ENCODE measurements at regions of chrX and their contacts with region 1.

Region 1: DNA sequence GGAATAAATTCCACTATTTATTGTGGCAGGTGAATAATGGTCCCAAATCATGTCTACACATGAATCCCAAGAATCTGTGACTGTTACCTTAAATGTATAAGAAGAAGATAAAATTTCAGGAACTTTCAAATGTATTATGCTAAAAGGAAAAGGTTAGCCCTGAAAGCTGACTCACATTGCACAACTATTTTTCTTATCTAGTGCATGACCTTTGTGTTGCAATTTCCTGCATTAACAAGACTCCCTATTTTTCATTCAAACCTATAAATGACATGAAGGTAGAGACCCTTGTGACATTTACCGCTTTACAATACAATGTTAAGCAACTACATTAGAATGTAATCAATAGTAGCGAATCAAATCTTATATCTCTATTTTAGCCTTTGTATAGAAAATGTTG is 36.7 kb downstream of the UBQLN2 start:
- DNase-seq: peak; percentile 12
- ATAC-seq: no peak
- H3K4me3 ChIP-seq: no peak overlapping the region
- H3K27ac ChIP-seq: no peak overlapping the region
- H3K4me1 ChIP-seq: peaks cover 27% of the 10 kb centered on the region
- H3K27me3 ChIP-seq: no peaks in the 10 kb centered on the region
- CTCF ChIP-seq: no peak
- EP300 ChIP-seq: no peak
- POLR2A ChIP-seq: no peak
- RAD21 ChIP-seq: no peak

Region 2: DNA sequence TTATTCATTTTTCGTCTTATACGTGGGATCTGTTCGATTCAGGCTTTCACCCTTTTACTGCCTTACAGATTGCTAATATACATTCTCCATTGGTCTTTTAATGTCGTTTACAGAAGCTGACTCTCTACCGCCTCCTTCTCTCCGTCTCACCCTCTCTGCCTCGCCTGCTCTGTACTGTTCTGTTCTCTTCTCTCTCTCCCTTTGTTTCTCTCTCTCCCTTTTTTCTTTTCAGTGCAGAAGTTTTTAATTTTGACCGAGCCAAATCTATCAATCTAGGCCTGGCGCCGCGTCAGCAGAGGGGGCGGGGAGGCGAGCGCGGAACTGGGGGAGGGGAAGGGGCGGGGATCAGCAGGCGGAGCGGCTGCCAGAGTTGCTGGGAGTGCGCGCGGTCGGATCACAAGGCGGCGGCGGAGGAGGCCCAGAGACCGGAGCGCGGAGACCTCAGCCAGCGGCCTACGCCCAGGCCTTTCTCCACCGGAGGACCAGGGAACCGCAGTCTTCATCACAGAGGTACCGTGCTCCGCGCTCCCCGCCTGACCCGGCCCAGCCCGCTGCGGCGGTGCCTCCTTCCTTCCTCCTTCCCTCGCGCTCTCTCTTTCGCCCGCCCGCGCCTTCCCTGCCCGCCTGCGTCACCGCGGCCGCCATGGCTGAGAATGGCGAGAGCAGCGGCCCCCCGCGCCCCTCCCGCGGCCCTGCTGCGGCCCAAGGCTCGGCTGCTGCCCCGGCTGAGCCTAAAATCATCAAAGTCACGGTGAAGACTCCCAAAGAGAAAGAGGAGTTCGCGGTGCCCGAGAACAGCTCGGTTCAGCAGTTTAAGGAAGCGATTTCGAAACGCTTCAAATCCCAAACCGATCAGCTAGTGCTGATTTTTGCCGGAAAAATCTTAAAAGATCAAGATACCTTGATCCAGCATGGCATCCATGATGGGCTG is 36.6 kb before region 1 on chrX and contains the start of gene UBQLN2:
- CTCF ChIA-PET with region 1: no interaction called
- POLR2A ChIA-PET with region 1: no interaction called
- in situ Hi-C with region 1: no loop called
- intact Hi-C with region 1: loop called (anchors 2 kb)
- DNase-seq: peak; percentile 30
- ATAC-seq: peak; percentile 92
- H3K4me3 ChIP-seq: peak within 1 kb of the TSS; percentile 76 to 80 (median 79)
- H3K27ac ChIP-seq: peak within 1 kb of the TSS; percentile 82
- H3K4me1 ChIP-seq: no peaks in the 10 kb centered on the region
- H3K27me3 ChIP-seq: no peaks in the 10 kb centered on the region; a peak in 1 of 5 replicates
- CTCF ChIP-seq: no peak
- EP300 ChIP-seq: no peak
- POLR2A ChIP-seq: peak; percentile 73 to 87
- RAD21 ChIP-seq: no peak
- total RNA-seq, gene UBQLN2: 4.1 and 6.9 TPM in 2 replicates

Region 3: GRCh38 chrX:56574861-56575260 is 25.3 kb before region 1 on chrX:
- CTCF ChIA-PET with region 1: no interaction called
- POLR2A ChIA-PET with region 1: no interaction called
- in situ Hi-C with region 1: no loop called
- intact Hi-C with region 1: no loop called
- DNase-seq: no peak
- ATAC-seq: no peak
- H3K4me3 ChIP-seq: no peak overlapping the region
- H3K27ac ChIP-seq: no peak overlapping the region
- H3K4me1 ChIP-seq: no peaks in the 10 kb centered on the region
- H3K27me3 ChIP-seq: no peaks in the 10 kb centered on the region
- CTCF ChIP-seq: no peak
- EP300 ChIP-seq: no peak
- POLR2A ChIP-seq: no peak
- RAD21 ChIP-seq: no peak

Region 4: DNA sequence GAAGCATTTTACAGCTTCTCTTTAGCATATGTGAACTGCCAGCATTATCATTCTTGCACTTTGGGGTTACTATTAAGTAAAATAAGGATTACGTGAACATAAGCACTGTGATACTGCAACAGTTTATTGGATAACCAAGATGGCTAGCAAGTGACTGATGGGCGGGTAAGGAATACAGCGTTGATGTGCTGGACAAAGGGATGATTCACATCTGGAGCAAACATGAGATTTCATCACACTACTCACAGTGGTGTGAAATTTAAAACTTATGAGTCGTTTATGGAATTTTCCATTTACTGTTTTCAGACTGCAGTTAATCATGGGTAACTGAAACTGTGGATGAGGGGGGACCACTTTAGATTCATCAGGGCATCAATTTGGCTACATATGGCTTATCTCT is 144.9 kb after region 1 on chrX:
- CTCF ChIA-PET with region 1: no interaction called
- POLR2A ChIA-PET with region 1: no interaction called
- in situ Hi-C with region 1: no loop called
- intact Hi-C with region 1: no loop called
- DNase-seq: peak; percentile 37
- ATAC-seq: no peak; the same call in 2 of the 3 replicates
- H3K4me3 ChIP-seq: no peak overlapping the region
- H3K27ac ChIP-seq: no peak overlapping the region
- H3K4me1 ChIP-seq: no peaks in the 10 kb centered on the region
- H3K27me3 ChIP-seq: no peaks in the 10 kb centered on the region
- CTCF ChIP-seq: no peak
- EP300 ChIP-seq: no peak
- POLR2A ChIP-seq: no peak
- RAD21 ChIP-seq: no peak

Measured in HepG2 (cell line).